Endothelial cell of umbilical vein (primary cell): ENCODE measurements at regions of chrX and their contacts with region 1.

Region 1: DNA sequence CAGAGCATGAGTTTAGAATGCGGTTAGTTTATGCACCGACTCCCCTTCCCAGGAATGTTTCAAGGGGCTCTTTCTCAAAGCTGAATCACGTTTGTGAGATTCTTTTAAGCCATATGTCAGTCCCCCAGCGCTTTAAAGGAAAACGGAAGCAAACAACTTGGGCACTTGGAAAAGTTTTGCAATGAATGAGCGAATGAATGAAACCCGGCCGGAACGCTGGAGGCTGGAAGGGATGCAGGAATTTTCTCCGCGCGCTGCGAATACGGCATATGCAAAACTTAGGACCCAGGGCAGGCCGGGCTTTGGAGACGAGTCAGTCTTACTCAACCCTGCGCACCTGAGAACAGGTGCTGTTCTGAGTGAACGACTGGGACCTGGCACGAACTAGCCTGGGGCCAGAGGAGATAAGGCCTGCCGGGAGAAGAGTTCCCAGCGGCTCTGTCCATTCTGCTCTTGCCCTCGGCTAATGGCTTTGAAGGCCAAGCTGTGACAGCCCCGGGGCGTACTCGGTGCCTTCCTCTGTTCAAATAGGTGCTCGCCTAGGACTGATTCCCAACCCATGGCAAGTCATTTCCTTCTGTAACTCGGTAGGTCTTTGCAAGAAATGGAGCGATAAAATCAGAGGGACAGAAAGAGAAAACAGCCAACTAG is 743 bp upstream of the NRK start:
- DNase-seq: peak; percentile 15
- H3K4me3 ChIP-seq: peak overlapping the region in 2 of 3 experiments; percentile 5 to 41
- H3K27ac ChIP-seq: no peak overlapping the region
- H3K4me1 ChIP-seq: peaks cover 9% of the 10 kb centered on the region
- H3K27me3 ChIP-seq: no peaks in the 10 kb centered on the region
- CTCF ChIP-seq: no peak
- POLR2A ChIP-seq: no peak

Region 2: DNA sequence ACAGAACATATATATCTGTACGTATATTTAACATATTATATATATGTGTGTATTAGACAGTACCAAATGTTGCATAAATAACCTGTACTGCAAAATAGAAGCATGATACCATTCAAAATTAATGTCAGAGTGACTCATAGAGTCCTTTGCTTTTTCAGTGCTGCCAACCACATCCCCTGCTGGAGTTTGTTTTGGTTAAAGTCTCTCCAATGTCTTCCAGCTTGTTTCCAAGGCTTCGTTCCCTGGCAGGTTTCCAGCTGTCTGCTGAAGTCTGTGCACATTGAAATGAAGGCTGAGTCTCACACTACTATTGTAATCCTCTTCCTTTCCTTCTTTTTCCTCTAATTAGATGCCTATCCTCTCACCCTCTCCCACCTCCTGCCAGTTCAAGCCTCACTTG is 15.6 kb after region 1 on chrX:
- CTCF ChIA-PET with region 1: no interaction called
- POLR2A ChIA-PET with region 1: no interaction called
- dilution Hi-C with region 1: no loop called
- intact Hi-C with region 1: loop called (anchors 2 kb)
- DNase-seq: peak; percentile 86
- H3K4me3 ChIP-seq: no peak overlapping the region
- H3K27ac ChIP-seq: peak overlapping the region; percentile 41
- H3K4me1 ChIP-seq: peaks cover 2% of the 10 kb centered on the region
- H3K27me3 ChIP-seq: no peaks in the 10 kb centered on the region
- CTCF ChIP-seq: no peak
- POLR2A ChIP-seq: no peak